ENCODE measurements at regions of chr19 and their contacts with region 1.

Region 1: GRCh38 chr19:48999481-49000325 is 6.0 kb downstream of the RUVBL2 start:
- DNase-seq: peak; percentile 76
- H3K4me3 Mint-ChIP-seq: no peak overlapping the region
- H3K27ac Mint-ChIP-seq: no peak overlapping the region
- H3K4me1 Mint-ChIP-seq: peaks cover 22% of the 10 kb centered on the region
- H3K27me3 Mint-ChIP-seq: no peaks in the 10 kb centered on the region

Region 2: GRCh38 chr19:48571378-48572162 is 428.1 kb before region 1 on chr19:
- CTCF ChIA-PET with region 1: no interaction called
- intact Hi-C with region 1: no loop called
- DNase-seq: no peak
- H3K4me3 Mint-ChIP-seq: no peak overlapping the region
- H3K27ac Mint-ChIP-seq: no peak overlapping the region
- H3K4me1 Mint-ChIP-seq: no peaks in the 10 kb centered on the region
- H3K27me3 Mint-ChIP-seq: peaks cover 2% of the 10 kb centered on the region

Region 3: DNA sequence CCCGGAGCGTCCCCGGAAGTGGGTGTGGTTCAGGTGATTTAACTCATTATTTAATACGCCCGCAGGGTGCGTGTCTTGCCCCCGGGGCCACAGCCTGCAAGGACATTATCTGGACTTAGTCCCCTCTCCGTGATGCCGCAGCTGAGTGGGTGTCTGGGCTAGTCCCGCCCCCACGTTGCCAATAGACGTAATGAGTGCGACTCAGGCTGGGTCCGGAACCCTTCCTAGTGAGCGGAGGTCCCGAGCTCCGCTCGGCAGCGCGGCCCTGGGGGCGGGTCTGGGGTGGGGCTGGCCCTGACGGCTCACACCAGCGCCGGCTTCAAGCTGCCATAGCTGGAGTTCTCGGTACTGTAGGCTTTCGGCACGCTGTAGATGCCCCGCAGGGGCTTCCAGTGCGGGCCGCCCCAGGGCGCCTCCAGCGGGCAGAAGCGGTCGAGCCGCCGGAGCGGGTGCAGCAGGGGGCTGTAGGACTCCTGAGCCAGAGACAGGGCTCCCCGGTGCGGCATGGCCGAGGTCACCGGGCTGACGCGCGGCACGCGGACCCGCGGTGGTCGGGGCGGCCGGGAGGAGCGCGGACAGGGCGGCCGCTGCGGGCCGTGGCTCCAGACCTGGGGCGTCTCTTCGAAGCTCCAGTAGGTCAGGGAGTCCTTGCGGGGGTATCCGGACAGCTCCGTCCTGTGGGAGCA is 18.1 kb after region 1 on chr19:
- CTCF ChIA-PET with region 1: interaction called, 22 read pairs
- intact Hi-C with region 1: no loop called
- DNase-seq: peak; percentile 64
- H3K4me3 Mint-ChIP-seq: peak overlapping the region; percentile 74
- H3K27ac Mint-ChIP-seq: no peak overlapping the region
- H3K4me1 Mint-ChIP-seq: peaks cover 27% of the 10 kb centered on the region
- H3K27me3 Mint-ChIP-seq: peaks cover 8% of the 10 kb centered on the region

Region 4: DNA sequence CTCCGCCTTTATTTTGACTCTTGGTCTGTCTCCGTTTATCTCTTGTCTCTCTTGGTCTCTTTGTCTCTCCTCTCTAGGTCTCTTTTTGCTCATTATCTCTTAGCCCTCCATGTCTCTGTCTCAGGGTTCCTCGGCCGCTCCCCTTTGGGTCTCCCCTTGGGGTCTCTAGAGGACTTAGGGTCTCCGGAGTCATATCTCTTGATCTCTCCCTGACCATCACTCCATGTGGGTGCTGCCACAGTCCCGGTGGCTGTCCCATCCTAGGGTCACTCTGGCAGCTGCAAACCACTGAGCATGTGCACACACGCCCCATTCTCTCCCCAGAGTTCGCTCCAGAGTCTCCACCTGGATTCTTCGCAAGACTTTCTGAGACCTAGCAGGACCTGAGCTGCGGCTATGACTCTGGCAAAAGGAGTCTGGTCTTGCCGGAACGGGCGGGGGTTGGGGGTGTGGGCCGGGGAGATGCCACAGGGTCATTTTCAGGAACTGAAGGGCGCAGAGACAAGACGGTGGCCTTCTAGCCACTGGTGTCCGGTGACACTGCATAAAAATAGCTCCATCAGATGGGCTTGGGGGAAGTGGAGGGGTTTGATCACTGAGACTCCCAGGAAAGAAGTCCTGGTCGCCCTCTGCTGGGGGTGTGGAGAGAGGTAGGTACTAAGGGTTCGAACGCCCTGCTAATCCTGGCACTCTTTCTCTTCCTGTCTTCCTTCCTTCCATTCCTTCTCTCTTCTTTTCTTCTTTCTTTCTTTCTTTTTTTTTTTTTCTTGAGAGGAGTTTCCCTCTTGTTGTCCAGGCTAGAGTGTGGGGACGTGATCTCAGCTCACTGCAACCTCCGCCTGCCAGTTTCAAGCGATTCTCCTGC is 74.0 kb after region 1 on chr19:
- CTCF ChIA-PET with region 1: interaction called, 6 read pairs
- intact Hi-C with region 1: loop called (anchors 1 kb)
- DNase-seq: peak; percentile 26
- H3K4me3 Mint-ChIP-seq: no peak overlapping the region
- H3K27ac Mint-ChIP-seq: no peak overlapping the region
- H3K4me1 Mint-ChIP-seq: peaks cover 9% of the 10 kb centered on the region
- H3K27me3 Mint-ChIP-seq: peaks cover 43% of the 10 kb centered on the region

Measured in activated naive CD4-positive, alpha-beta T cell treated with anti-CD3 and anti-CD28 coated beads for 36 hours (primary cell).